ENCODE measurements at regions of chrX and their contacts with region 1.

Region 1: DNA sequence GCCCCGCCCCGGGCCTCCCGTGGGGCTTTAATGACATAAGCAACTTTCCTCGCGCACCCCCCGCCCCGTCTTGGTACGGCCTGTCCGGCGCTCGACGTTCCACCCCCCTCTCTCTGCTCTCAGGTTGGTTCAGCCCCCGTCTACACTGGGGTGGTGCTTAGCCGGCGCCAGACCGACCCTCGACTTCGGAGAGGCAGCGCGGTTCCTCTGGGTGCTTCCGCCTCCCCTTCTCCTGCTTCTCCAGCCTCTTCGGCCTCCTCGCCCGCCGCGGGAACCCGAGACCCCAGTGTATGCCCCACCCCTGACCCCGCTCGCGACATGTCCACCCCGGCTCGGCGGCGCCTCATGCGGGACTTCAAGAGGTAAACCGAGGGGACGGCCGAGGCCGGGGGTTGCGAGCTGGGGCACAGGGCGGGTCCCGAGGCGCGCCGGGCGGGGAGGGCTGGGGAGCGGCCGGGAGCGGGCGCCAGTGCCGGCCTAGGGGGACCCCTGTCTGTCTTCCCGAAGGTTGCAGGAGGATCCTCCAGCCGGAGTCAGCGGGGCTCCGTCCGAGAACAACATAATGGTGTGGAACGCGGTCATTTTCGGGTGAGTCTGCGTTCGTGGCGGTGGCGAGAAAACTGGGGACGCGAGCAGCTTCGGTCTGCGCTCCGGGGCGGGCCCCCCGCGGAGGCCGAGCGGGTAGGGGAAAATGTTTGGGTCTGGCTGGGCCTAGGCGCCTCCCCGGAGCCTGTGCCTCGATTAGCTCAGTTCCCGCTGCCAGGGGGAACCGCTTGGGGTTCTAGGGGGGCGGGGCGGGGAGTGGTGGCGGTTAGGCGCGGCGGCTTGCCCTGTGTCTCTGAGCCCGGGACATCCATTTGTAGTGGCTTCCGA is at the start of gene UBE2A:
- DNase-seq: peak; percentile 95
- H3K4me3 Mint-ChIP-seq: peak within 1 kb of the TSS; percentile 92
- H3K27ac Mint-ChIP-seq: peak within 1 kb of the TSS; percentile 89
- H3K4me1 Mint-ChIP-seq: peaks cover 5% of the 10 kb centered on the region
- H3K27me3 Mint-ChIP-seq: no peaks in the 10 kb centered on the region
- total RNA-seq, gene UBE2A: 58.8 and 60.9 TPM in 2 replicates

Region 2: DNA sequence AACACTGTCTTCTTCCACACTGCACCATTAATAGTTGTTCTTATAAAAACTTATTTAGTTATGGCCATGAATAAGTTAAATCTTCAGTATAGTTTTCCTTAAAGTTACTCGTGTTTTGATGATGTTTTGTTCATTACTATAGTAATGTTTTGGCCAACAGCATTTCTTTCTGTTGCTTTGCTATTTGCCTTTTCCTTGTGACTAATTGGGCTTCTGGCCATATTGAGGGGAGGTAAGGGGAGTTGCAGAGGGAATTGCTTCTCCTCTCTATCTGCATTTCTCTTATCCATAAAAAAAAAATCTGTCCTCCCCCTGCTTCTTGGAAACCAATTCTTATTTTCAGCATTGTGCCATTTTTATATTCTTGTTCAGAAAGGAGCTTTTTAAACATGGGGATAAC is 793.7 kb before region 1 on chrX:
- intact Hi-C with region 1: no loop called
- DNase-seq: no peak
- H3K4me3 Mint-ChIP-seq: no peak overlapping the region
- H3K27ac Mint-ChIP-seq: no peak overlapping the region
- H3K4me1 Mint-ChIP-seq: no peaks in the 10 kb centered on the region
- H3K27me3 Mint-ChIP-seq: peaks cover 2% of the 10 kb centered on the region

Region 3: DNA sequence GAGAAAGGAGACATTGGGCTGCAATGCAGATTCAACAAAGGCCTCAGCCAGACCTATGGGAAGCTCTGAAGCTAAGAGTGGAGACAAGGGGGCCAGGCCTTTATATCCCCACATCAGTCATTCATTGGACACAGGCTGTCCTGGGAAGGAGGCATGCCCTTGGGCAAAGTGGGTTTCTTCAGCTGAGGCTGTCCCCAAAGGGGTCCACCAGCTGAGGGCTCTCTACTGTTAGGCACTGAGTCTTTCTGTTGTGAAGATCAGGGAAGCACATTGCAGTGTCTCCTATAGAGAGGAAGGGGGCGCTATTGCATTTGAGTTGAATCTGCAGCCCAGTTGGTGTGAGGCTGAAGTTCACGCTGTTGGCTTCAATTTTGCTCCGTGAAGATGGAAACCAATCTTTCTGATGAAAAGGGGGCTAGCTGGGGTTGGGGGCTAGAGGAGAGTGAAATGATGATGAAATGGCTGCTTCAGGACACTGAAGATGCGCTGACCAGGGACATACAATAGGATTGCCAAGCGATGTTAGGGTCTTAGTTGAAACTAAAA is 58.4 kb before region 1 on chrX:
- intact Hi-C with region 1: loop called (anchors 10 kb)
- DNase-seq: peak; percentile 82
- H3K4me3 Mint-ChIP-seq: no peak overlapping the region
- H3K27ac Mint-ChIP-seq: no peak overlapping the region
- H3K4me1 Mint-ChIP-seq: peaks cover 3% of the 10 kb centered on the region
- H3K27me3 Mint-ChIP-seq: no peaks in the 10 kb centered on the region

Region 4: GRCh38 chrX:119606280-119607015 is 31.8 kb after region 1 on chrX and contains the start of gene NKRF:
- intact Hi-C with region 1: loop called (anchors 2 kb)
- DNase-seq: peak; percentile 96
- H3K4me3 Mint-ChIP-seq: peak within 1 kb of the TSS; percentile 99
- H3K27ac Mint-ChIP-seq: peak within 1 kb of the TSS; percentile 95
- H3K4me1 Mint-ChIP-seq: peaks cover 20% of the 10 kb centered on the region
- H3K27me3 Mint-ChIP-seq: no peaks in the 10 kb centered on the region
- total RNA-seq, gene NKRF: 28.0 and 29.8 TPM in 2 replicates

Region 5: DNA sequence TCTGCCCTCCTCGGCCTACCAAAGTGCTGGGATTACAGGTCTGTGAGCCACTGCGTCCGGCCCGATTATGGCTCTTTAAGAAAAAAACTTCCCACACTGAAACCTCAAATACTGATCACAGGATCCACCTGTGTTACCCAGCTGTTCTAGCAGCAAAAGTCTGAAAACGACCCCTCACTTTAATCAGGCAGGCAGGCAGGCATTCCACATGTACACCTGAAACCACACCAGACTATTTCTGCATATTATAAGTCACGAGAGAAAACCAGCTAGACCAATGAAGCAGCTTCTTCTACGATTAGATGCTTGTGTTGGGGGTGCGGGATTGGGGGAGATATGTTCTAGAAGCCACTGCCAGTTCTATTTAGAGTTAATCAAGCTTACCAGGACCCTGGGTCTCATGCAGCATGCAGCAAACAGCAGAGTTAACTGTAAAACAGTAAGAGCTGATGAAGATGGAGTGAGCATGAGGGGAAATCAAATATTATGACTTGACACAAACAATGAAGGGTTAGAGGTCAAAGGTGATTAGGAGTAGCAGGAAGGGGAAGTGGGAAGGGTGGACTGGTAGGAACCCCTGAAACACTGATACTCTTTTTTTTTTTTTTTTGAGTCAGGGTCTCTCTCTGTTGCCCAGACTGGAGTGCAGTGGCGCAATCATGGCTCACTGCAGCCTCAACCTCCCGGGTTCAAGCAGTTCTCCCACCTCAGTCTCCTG is 50.5 kb after region 1 on chrX:
- intact Hi-C with region 1: no loop called
- DNase-seq: no peak
- H3K4me3 Mint-ChIP-seq: no peak overlapping the region
- H3K27ac Mint-ChIP-seq: no peak overlapping the region
- H3K4me1 Mint-ChIP-seq: no peaks in the 10 kb centered on the region
- H3K27me3 Mint-ChIP-seq: no peaks in the 10 kb centered on the region

Region 6: DNA sequence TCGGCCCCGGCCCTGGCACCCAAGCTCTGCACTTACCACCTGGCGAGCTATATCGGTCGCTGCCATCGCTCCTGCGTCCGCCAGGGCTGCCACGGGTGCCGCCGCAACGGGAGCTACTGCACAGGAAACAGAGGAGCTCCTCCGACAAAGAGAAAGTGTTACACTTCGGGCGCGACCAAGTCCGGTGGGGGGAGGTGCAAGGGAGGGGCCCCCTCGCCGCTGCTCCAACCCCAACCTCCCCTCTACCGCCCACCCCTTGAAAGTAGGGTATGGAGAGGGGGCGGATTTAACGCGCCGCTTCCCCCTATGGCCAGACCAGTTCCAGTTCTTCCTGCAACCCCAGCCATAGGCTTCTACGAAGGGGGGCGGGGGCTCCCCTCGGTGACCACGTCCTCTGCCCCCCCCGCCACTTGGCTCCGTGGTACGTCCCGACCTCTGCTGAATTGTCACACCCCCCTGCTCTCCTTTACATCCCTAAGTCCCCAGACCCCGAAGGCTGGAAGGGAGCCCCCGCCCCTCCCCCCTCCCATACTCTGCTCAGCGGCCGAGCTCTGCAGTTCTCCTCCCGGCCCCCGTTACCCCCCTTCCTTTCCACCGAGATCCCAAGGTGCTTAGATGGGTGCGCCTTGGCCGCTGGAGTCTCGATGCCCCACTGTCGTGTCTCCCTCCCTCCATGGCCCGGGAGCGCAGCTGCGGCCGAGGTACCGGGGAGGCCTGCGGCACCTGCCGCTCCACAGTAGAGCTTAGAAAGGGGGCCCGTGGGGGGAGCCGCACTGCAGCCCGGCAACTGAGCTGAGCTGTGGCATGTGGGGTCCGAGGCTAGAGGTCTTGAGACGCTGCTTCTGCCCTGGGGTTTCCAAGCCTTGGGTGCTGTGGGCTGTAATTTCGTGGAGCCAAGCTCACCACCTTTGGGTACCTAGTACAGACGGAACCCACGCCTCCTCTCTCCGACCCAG is 118.7 kb after region 1 on chrX and contains the start of gene SEPTIN6:
- intact Hi-C with region 1: loop called (anchors 2 kb)
- DNase-seq: peak; percentile 94
- H3K4me3 Mint-ChIP-seq: peak within 1 kb of the TSS; percentile 96
- H3K27ac Mint-ChIP-seq: peak within 1 kb of the TSS; percentile 99
- H3K4me1 Mint-ChIP-seq: peaks cover 4% of the 10 kb centered on the region
- H3K27me3 Mint-ChIP-seq: no peaks in the 10 kb centered on the region
- total RNA-seq, gene SEPTIN6: 151 and 153 TPM in 2 replicates

Region 7: GRCh38 chrX:119880552-119881437 is 306.2 kb after region 1 on chrX:
- intact Hi-C with region 1: loop called (anchors 10 kb)
- DNase-seq: peak; percentile 77
- H3K4me3 Mint-ChIP-seq: no peak overlapping the region
- H3K27ac Mint-ChIP-seq: peak overlapping the region; percentile 41
- H3K4me1 Mint-ChIP-seq: peaks cover 10% of the 10 kb centered on the region
- H3K27me3 Mint-ChIP-seq: no peaks in the 10 kb centered on the region

Region 8: GRCh38 chrX:119943185-119943988 is 368.8 kb after region 1 on chrX and contains the start of gene NKAP:
- intact Hi-C with region 1: loop called (anchors 5 kb)
- DNase-seq: peak; percentile 95
- H3K4me3 Mint-ChIP-seq: peak within 1 kb of the TSS; percentile 91
- H3K27ac Mint-ChIP-seq: peak within 1 kb of the TSS; percentile 97
- H3K4me1 Mint-ChIP-seq: peaks cover 14% of the 10 kb centered on the region
- H3K27me3 Mint-ChIP-seq: peaks cover 2% of the 10 kb centered on the region
- total RNA-seq, gene NKAP: 8.9 and 10.2 TPM in 2 replicates

Region 9: DNA sequence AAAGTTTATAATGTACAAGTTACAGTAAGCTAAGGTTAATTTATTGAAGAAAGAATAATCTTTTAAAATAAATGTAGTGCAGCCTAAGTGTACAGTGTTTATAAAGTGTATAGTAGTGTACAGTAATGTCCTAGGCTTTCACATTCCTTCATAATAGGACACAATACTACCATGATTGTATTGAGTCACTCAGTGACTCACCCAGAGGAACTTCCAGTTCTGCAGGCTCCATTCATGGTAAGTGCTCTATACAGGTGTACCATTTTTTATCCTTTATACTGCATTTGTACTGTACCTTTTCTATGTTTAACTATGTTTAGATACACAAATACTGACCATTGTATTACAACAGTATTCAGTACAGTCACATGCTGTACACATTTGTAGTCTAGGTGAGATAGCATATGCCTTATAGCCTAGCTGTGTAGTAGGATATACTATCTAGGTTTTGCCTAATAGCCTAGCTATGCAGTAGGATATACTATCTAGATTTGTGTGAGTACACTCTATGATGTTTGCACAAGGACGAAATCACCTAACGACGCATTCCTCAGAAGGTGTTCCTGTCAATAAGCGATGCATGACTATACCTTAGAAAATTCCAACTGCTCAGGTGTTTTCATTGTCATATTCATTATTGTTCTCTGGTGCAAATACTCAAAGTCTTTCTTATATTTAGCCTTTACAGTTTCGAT is 742.1 kb after region 1 on chrX:
- intact Hi-C with region 1: no loop called
- DNase-seq: no peak
- H3K4me3 Mint-ChIP-seq: no peak overlapping the region
- H3K27ac Mint-ChIP-seq: no peak overlapping the region
- H3K4me1 Mint-ChIP-seq: no peaks in the 10 kb centered on the region
- H3K27me3 Mint-ChIP-seq: peaks cover 47% of the 10 kb centered on the region